Common myeloid progenitor, CD34-positive (primary cell): ENCODE measurements at regions of chr11 and their contacts with region 1.

Region 1: DNA sequence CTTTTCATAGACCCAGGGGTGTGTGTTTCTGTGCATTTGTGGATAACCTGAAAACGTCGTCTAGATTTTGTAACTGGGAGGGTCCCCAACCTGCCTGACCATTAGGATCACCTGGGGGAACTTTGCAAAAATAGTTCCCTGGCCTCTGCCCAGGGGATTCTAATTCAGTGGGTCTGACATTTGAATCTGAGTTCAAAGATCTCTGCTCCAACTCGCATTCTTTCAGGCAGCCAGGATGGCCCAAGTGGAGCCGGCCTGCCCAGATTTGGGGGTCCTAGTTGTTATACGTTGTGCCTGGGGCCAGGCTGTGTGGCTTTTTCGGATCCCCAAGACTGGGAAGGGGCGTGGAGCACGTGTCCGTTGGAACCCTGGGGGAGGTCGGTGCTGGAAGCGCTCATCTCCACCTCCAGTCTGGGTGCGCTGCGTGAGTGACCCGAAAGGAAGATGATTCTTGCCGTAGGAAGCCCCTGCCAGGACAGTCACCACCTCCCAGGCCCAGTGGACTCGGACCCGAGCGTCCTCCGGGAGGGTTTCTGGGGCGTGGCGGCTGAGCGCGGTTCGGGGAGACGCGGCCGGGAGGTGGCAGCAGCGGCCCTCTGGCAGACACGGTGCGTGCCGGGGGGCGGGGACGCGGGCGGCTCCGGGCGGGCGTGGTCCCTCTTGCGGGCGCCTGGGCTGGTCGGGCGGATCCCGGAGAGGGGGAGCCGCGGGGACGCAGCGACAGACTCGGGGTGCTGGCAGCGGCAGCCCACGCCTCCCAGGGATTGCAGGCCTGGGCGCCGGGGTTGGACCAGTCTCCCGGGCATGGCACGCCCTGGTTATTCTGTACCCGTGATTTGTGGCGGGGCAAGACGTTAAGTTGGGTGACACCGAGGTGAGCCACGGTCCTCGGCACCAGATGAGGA is 29.2 kb upstream of the PLET1 start:
- DNase-seq: peak; percentile 71 to 83 (median 78)
- H3K4me3 ChIP-seq: peak overlapping the region; percentile 24 to 80 (median 59)
- H3K27ac ChIP-seq: no peak overlapping the region
- H3K4me1 ChIP-seq: peaks cover 0 to 25% (median 8%) of the 10 kb centered on the region in 4 experiments
- H3K27me3 ChIP-seq: peaks cover 0 to 2% (median 0%) of the 10 kb centered on the region in 5 experiments

Region 2: GRCh38 chr11:112453601-112454577 is 164.0 kb after region 1 on chr11:
- CTCF ChIA-PET with region 1: interaction called, 16 read pairs
- POLR2A ChIA-PET with region 1: no interaction called
- DNase-seq: peak; percentile 34 to 65 (median 47)
- H3K4me3 ChIP-seq: no peak overlapping the region
- H3K27ac ChIP-seq: no peak overlapping the region
- H3K4me1 ChIP-seq: no peaks in the 10 kb centered on the region
- H3K27me3 ChIP-seq: peaks cover 0 to 2% (median 0%) of the 10 kb centered on the region in 5 experiments

Region 3: DNA sequence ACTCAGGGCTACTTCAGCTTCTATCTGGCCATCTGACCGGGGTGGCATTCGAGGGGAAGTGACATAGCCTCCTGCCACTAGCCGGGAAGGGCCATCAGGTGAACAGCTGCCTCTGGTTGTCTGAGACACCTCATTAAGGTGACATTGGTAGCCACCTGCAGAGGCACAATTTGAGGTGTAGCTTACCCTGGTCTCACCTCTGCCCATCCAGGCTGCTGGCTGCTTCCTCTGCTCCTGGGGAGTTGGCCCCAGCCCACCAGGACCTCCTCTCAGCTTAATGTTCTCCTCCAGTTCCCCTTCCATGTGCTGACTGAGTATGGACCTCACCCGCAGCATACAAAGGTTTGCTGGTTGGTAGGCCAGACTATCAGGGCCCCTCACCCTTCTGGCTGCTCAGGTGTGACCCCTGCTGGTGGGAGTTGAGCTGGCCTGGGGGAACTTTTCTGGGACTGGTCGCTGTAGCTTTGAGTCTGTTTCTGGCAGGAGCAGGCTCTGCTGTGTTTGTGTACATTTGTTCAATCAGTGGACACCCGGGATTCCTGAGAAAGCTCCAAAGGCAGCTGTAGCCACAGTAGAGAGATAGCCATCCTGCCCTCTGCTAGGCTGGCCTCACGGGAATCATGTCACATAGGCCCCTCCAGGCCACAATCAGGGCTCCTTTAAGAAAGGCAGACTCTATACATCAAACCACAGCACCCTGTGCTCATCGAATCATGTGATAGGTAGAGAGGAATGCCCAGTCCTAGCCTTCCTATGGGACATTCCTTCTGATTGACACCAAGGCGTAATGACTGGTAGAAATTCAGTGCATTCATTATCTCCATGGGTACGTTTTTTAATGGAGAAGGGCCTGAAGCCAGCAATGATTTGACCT is 265.9 kb after region 1 on chr11:
- CTCF ChIA-PET with region 1: interaction called, 25 read pairs
- POLR2A ChIA-PET with region 1: no interaction called
- DNase-seq: peak; percentile 50 to 77 (median 73)
- H3K4me3 ChIP-seq: no peak overlapping the region
- H3K27ac ChIP-seq: no peak overlapping the region
- H3K4me1 ChIP-seq: no peaks in the 10 kb centered on the region
- H3K27me3 ChIP-seq: no peaks in the 10 kb centered on the region

Region 4: GRCh38 chr11:113289431-113290187 is 999.8 kb after region 1 on chr11:
- CTCF ChIA-PET with region 1: interaction called, 19 read pairs
- POLR2A ChIA-PET with region 1: no interaction called
- DNase-seq: peak; percentile 31 to 71 (median 64)
- H3K4me3 ChIP-seq: no peak overlapping the region
- H3K27ac ChIP-seq: no peak overlapping the region
- H3K4me1 ChIP-seq: no peaks in the 10 kb centered on the region
- H3K27me3 ChIP-seq: peaks cover 0 to 7% (median 0%) of the 10 kb centered on the region in 5 experiments